ENCODE measurements at regions of chr2 and their contacts with region 1.

Region 1: GRCh38 chr2:218194880-218195279 is 22.1 kb upstream of the ARPC2 start:
- DNase-seq: no peak
- H3K4me3 ChIP-seq: no peak overlapping the region
- H3K4me3 Mint-ChIP-seq: no peak overlapping the region
- H3K27ac ChIP-seq: no peak overlapping the region
- H3K27ac Mint-ChIP-seq: no peak overlapping the region
- H3K4me1 ChIP-seq: no peaks in the 10 kb centered on the region
- H3K4me1 Mint-ChIP-seq: no peaks in the 10 kb centered on the region
- H3K27me3 ChIP-seq: no peaks in the 10 kb centered on the region
- H3K27me3 Mint-ChIP-seq: peaks cover 5% of the 10 kb centered on the region in 2 donors

Region 2: DNA sequence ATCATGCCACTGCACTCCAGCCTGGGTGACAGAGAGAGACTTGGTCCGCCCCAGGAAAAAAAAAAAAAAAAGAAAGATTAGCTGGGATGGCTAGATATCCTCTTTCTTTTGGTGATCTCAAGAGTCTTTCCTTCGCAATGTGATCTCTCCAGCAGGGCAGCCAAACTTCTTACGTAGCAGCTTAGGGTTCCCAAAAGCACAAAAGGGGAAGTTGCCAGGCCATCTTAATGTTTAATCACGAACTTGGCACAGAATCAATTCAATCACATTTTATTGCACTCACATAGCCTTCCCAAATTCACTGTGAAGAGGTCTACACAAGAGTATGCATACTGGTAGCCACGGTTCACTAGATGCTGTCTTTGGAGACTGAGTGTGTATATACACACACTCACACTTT is 277.1 kb after region 1 on chr2:
- CTCF ChIA-PET with region 1: no interaction called
- POLR2A ChIA-PET with region 1: no interaction called
- intact Hi-C with region 1: loop called (anchors 10 kb)
- DNase-seq: no peak
- H3K4me3 ChIP-seq: no peak overlapping the region
- H3K4me3 Mint-ChIP-seq: no peak overlapping the region
- H3K27ac ChIP-seq: no peak overlapping the region
- H3K27ac Mint-ChIP-seq: no peak overlapping the region
- H3K4me1 ChIP-seq: no peaks in the 10 kb centered on the region
- H3K4me1 Mint-ChIP-seq: peaks cover 0 to 10% (median 5%) of the 10 kb centered on the region in 4 donors
- H3K27me3 ChIP-seq: no peaks in the 10 kb centered on the region
- H3K27me3 Mint-ChIP-seq: no peaks in the 10 kb centered on the region